Endothelial cell of umbilical vein (primary cell): ENCODE measurements at regions of chr12 and their contacts with region 1.

Region 1: GRCh38 chr12:94621664-94622359 is 28.5 kb downstream of the TMCC3 start:
- DNase-seq: peak; percentile 81
- H3K4me3 ChIP-seq: peak overlapping the region in 2 of 3 experiments; percentile 67 to 72
- H3K27ac ChIP-seq: peak overlapping the region; percentile 97
- H3K4me1 ChIP-seq: peaks cover 41% of the 10 kb centered on the region
- H3K27me3 ChIP-seq: no peaks in the 10 kb centered on the region
- CTCF ChIP-seq: no peak
- POLR2A ChIP-seq: no peak

Region 2: GRCh38 chr12:94586589-94587259 is 35.1 kb before region 1 on chr12:
- CTCF ChIA-PET with region 1: interaction called, 3 read pairs
- POLR2A ChIA-PET with region 1: no interaction called
- dilution Hi-C with region 1: no loop called
- intact Hi-C with region 1: loop called (anchors 1 kb)
- DNase-seq: peak; percentile 95
- H3K4me3 ChIP-seq: no peak overlapping the region
- H3K27ac ChIP-seq: peak overlapping the region; percentile 57
- H3K4me1 ChIP-seq: peaks cover 54% of the 10 kb centered on the region
- H3K27me3 ChIP-seq: no peaks in the 10 kb centered on the region
- CTCF ChIP-seq: no peak
- POLR2A ChIP-seq: no peak

Region 3: DNA sequence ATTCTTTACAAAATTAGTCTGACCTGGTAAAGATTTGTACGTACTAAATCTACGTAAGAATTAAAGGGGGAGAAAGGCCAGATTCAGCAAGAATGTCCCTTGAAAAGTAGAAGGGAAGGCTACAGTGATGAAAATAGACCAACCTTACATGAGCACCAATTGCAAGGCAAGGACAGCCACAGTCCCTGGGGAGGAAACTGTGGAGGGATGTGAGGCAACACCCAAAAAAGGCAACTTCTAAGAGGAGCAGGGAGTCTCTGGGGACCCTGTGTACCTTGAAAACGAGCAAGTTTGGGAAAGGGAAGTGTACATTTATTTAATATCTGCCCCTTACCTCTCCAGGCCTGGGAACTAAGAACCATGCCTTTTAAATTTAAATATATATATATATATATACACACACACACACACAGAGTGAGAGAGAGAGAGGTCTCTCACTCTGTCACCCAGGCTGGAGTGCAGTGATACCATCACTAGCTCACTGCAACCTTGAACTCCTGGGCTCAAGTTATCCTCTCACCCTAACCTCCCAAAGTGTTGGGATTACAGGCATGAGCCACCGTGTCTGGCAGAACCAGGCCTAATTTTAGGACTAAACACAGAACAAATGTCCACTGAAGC is 27.9 kb before region 1 on chr12:
- CTCF ChIA-PET with region 1: interaction called, 4 read pairs
- POLR2A ChIA-PET with region 1: interaction called, 3 read pairs
- dilution Hi-C with region 1: no loop called
- intact Hi-C with region 1: loop called (anchors 1 kb)
- DNase-seq: no peak
- H3K4me3 ChIP-seq: no peak overlapping the region
- H3K27ac ChIP-seq: peak overlapping the region; percentile 0
- H3K4me1 ChIP-seq: peaks cover 57% of the 10 kb centered on the region
- H3K27me3 ChIP-seq: no peaks in the 10 kb centered on the region
- CTCF ChIP-seq: no peak
- POLR2A ChIP-seq: no peak

Region 4: GRCh38 chr12:94634717-94635116 is 12.9 kb after region 1 on chr12:
- CTCF ChIA-PET with region 1: interaction called, 10 read pairs
- POLR2A ChIA-PET with region 1: no interaction called
- dilution Hi-C with region 1: no loop called
- intact Hi-C with region 1: no loop called
- DNase-seq: peak; percentile 18
- H3K4me3 ChIP-seq: no peak overlapping the region
- H3K27ac ChIP-seq: no peak overlapping the region
- H3K4me1 ChIP-seq: peaks cover 9% of the 10 kb centered on the region
- H3K27me3 ChIP-seq: no peaks in the 10 kb centered on the region
- CTCF ChIP-seq: no peak
- POLR2A ChIP-seq: no peak

Region 5: GRCh38 chr12:94644141-94644979 is 22.5 kb after region 1 on chr12:
- CTCF ChIA-PET with region 1: interaction called, 5 read pairs
- POLR2A ChIA-PET with region 1: no interaction called
- dilution Hi-C with region 1: no loop called
- intact Hi-C with region 1: loop called (anchors 1 kb)
- DNase-seq: peak; percentile 83
- H3K4me3 ChIP-seq: peak overlapping the region in 1 of 3 experiments; percentile 34
- H3K27ac ChIP-seq: peak overlapping the region; percentile 79
- H3K4me1 ChIP-seq: peaks cover 43% of the 10 kb centered on the region
- H3K27me3 ChIP-seq: no peaks in the 10 kb centered on the region
- CTCF ChIP-seq: no peak
- POLR2A ChIP-seq: no peak

Region 6: GRCh38 chr12:94649349-94650142 is 27.7 kb after region 1 on chr12:
- CTCF ChIA-PET with region 1: interaction called, 5 read pairs
- POLR2A ChIA-PET with region 1: no interaction called
- dilution Hi-C with region 1: no loop called
- intact Hi-C with region 1: loop called (anchors 1 kb)
- DNase-seq: peak; percentile 64
- H3K4me3 ChIP-seq: peak overlapping the region; percentile 52 to 96 (median 87)
- H3K27ac ChIP-seq: peak overlapping the region; percentile 85
- H3K4me1 ChIP-seq: peaks cover 28% of the 10 kb centered on the region
- H3K27me3 ChIP-seq: no peaks in the 10 kb centered on the region
- CTCF ChIP-seq: peak; percentile 29 to 43
- POLR2A ChIP-seq: no peak